Activated naive CD4-positive, alpha-beta T cell treated with anti-CD3 and anti-CD28 coated beads for 36 hours (primary cell): ENCODE measurements at regions of chr22 and their contacts with region 1.

Region 1: GRCh38 chr22:40679964-40680818 is 907 bp downstream of the MCHR1 start:
- DNase-seq: no peak
- H3K4me3 Mint-ChIP-seq: no peak overlapping the region
- H3K27ac Mint-ChIP-seq: no peak overlapping the region
- H3K4me1 Mint-ChIP-seq: peaks cover 34% of the 10 kb centered on the region
- H3K27me3 Mint-ChIP-seq: peaks cover 16% of the 10 kb centered on the region

Region 2: DNA sequence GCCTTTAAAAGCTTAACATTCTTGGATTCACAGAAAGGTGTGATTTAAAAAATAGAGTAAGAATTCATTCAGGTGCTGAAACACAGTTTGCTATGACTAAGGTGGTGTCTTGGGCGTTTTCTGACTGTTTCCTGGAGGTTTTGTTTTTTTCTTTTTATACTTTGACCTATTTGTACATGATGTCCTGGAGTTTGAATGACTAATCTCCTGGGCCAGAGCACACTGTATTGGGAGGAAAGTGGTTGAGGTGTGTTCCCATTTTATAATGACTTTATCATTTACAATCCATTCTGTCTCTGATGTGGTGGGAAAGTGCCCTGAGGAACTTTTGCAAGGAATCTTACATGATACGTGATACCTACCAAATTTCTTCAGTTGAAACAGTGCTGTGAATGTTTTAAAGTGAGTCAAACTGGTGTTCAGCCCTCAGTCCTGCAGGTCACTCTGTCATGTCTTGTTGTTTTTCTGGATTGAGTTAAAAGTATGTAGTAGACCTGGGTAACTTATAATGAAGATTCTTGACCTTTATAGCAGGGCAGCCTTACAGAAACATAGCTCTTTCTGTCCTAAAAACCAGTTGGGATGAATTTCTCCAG is 421.6 kb before region 1 on chr22:
- CTCF ChIA-PET with region 1: no interaction called
- intact Hi-C with region 1: no loop called
- DNase-seq: peak; percentile 46
- H3K4me3 Mint-ChIP-seq: no peak overlapping the region
- H3K27ac Mint-ChIP-seq: peak overlapping the region; percentile 66
- H3K4me1 Mint-ChIP-seq: peaks cover 60% of the 10 kb centered on the region
- H3K27me3 Mint-ChIP-seq: no peaks in the 10 kb centered on the region

Region 3: DNA sequence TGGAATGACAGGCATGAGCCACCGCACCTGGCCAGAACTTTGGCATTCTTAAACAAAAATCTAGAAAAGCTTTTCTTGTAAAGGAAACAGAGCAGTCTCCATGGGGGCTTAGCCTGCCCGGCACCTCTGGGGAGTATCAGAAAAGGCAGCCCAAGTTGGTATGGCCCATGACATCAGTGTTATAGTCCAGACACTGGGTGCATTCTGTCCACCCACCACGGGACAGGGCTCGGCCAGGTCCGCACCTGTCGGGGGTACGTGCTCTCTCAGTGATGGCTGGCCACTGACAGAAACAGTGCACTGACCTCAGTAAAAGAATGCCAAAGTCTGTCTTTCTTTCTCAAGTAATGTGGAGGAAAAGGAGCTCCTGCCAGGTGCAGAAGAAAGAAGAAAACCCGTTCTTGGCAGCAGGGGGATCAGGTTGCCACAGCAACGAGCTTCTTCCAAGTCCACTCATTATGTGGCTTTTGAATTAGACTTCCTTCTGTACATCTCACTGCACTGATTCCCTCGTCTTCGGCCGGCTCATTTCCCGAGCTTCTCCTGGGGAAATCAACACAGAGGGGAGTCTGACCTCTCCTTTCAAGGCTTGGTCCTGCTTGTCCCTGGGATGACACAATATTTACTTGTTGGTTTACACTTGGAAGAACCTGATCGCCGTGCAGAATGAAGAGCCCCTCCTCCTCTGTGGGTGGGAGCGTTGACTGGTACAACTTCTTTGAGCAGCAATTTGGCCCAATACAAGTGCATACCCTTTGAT is 34.2 kb after region 1 on chr22:
- CTCF ChIA-PET with region 1: interaction called, 7 read pairs
- intact Hi-C with region 1: loop called (anchors 1 kb)
- DNase-seq: no peak
- H3K4me3 Mint-ChIP-seq: no peak overlapping the region
- H3K27ac Mint-ChIP-seq: no peak overlapping the region
- H3K4me1 Mint-ChIP-seq: peaks cover 29% of the 10 kb centered on the region
- H3K27me3 Mint-ChIP-seq: no peaks in the 10 kb centered on the region

Region 4: GRCh38 chr22:40757071-40757470 is 76.9 kb after region 1 on chr22:
- CTCF ChIA-PET with region 1: interaction called, 60 read pairs
- intact Hi-C with region 1: loop called (anchors 1 kb)
- DNase-seq: no peak
- H3K4me3 Mint-ChIP-seq: no peak overlapping the region
- H3K27ac Mint-ChIP-seq: no peak overlapping the region
- H3K4me1 Mint-ChIP-seq: peaks cover 3% of the 10 kb centered on the region
- H3K27me3 Mint-ChIP-seq: no peaks in the 10 kb centered on the region

Region 5: DNA sequence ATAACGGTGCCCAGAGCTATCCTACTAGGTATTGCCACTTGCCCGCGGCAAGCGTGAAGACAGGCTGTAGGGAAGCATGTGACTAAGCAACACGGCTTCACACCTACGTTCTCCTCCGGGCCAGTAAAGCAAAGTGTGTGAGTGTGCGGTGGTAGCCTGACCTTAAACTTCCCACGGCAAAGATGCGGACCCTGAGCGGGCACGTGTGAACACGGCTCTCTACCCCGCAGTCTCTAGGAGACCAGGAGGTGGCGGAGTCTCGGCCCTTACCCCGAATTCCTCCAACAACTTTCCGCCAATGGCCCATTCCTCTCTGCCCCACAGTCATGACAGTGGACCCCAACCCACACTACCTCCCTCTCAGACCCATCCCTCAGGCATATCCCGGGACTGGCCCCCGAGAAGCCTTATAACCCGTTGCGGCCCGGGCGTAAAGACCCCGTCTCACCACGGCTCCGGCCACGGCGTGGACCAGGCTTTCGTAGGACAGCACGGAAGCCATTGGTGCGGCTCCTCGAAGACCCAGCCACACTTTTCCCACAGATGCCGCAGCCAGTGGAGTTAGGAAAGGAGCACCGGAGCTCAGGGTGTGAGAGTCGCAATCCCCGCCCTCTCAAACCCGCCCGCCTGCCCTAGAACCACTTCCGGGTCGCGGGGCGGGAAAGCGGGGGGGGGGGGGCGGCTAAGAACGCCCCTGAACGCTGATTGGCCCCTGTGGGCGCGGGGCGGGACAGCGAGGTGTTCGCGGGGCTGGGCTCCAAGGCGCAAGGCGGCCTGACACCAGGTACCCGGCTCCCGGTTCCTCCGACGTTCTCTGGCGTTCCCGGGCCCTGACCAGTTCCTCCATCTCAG is 138.8 kb after region 1 on chr22 and contains the start of gene SLC25A17:
- CTCF ChIA-PET with region 1: interaction called, 6 read pairs
- intact Hi-C with region 1: loop called (anchors 1 kb)
- DNase-seq: peak; percentile 89
- H3K4me3 Mint-ChIP-seq: peak within 1 kb of the TSS; percentile 94
- H3K27ac Mint-ChIP-seq: peak within 1 kb of the TSS; percentile 83
- H3K4me1 Mint-ChIP-seq: peaks cover 34% of the 10 kb centered on the region
- H3K27me3 Mint-ChIP-seq: no peaks in the 10 kb centered on the region
- total RNA-seq, gene SLC25A17: 23.0 to 24.6 TPM

Region 6: DNA sequence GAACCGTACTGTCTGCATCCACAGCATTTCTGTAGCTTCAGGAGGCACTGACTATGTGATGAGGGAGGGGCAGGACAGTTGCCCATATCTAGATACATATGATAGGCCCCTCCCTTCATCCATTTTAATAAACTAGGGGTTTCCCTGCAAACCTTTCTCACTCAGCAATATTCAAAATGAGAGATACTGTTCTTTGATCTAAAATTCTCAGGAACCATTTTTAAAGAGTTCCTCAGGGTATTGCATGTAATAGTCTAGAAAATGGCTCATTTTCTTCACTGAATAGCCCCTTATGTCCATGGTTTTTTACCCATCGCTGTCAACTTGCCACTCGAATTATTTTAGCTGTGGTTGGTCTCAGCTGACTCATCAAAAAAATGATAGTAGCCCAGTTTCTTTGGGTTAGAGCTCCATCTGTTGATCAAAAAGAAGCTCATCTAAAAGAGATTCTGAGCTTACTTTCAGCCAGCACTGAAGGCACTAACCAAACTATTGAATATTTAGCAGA is 218.7 kb after region 1 on chr22:
- CTCF ChIA-PET with region 1: interaction called, 14 read pairs
- intact Hi-C with region 1: loop called (anchors 1 kb)
- DNase-seq: peak; percentile 45
- H3K4me3 Mint-ChIP-seq: peak overlapping the region; percentile 17
- H3K27ac Mint-ChIP-seq: peak overlapping the region; percentile 54
- H3K4me1 Mint-ChIP-seq: peaks cover 12% of the 10 kb centered on the region
- H3K27me3 Mint-ChIP-seq: no peaks in the 10 kb centered on the region